ENCODE measurements at regions of chr16 and their contacts with region 1.

Region 1: GRCh38 chr16:60419859-60420258 is 1616.4 kb downstream of the CDH8 start:
- DNase-seq: no peak
- H3K4me3 ChIP-seq: no peak overlapping the region
- H3K27ac ChIP-seq: no peak overlapping the region
- H3K4me1 ChIP-seq: no peaks in the 10 kb centered on the region
- H3K27me3 ChIP-seq: no peaks in the 10 kb centered on the region
- CTCF ChIP-seq: no peak
- POLR2A ChIP-seq: no peak

Region 2: DNA sequence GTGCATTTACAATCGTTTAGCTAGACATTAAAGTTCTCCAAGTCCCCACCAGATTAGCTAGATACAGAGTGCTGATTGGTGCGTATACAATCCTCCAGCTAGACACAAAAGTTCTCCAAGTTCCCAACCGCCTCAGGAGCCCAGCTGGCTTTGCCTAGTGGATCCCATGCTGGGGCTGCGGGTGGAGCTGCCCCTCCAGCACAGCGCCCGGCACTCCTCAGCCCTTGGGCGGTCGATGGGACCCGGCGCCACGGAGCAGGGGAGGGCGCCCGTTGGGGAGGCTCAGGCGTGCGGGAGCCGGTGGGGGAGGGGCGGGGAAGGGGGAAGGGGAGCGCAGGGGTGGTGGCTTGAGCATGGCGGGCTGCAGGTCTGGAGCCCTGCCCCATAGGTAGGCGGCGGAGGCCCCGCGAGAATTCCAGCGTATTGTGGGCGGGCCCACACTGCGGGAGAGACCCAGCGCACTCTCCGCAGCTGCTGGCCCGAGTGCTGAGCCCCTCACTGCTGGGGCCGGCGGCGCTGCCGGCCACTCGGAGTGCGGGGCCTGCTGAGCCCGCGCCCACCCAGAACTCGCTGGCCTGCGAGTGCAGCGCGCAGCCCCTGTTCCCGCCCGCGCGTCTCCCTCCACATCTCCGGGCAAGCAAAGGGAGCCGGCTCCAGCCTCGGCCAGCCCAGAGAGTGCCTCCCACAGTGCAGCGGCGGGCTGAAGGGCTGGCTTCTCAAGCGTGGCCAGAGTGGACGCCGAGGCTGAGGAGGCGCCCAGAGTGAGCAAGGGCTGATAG is 708.9 kb after region 1 on chr16:
- intact Hi-C with region 1: loop called (anchors 10 kb)
- DNase-seq: no peak
- H3K4me3 ChIP-seq: no peak overlapping the region
- H3K27ac ChIP-seq: no peak overlapping the region
- H3K4me1 ChIP-seq: no peaks in the 10 kb centered on the region
- H3K27me3 ChIP-seq: no peaks in the 10 kb centered on the region
- CTCF ChIP-seq: no peak
- POLR2A ChIP-seq: no peak

Measured in breast epithelium (tissue), 4 donors.